ENCODE measurements at regions of chr7 and their contacts with region 1.

Region 1: DNA sequence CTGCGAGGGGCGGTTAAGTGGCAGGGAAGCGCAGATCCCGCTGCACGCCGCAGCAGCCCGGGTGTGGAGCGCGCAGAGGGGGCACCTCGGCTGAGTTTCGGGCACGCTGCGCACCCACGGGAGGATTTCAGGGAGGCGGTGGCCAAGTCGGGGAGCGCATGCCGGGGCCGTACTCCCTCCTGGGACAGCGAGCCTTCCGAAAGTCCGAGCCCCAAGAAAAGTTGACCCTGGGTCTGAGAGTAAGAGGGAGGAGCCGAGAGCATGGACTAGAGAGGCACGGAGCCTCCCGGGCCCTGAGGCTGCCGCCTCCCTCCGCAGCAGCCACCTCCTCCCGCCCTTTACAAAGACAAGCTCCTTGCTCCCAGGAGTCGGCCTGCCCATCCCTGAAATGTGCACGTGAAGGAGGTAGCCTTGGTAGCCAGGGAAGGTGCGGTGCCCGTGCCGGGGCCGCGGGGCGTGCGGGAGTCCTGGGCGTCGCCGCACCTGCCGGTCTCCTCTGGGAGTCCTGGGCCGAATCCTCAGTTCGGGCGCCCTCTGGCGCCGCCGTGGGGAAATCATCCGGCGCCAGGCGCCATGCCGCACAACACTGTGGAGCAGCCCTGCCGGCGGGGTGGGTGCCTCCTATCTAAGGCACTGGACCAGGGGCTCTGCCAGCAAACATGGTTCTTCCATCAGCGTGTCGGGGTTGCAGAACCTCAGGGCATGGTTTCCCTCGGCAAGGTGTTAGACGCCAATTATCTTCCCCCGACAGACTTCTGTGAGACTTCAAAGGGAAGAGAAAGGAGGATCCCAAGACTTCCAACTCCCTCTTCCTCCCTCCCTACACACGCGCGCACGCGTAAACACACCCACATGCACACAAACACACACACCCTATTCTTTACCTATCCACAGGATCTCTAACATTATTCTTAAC is 104.0 kb downstream of the TRIL start:
- DNase-seq: peak; percentile 74 to 91 (median 83)
- ATAC-seq: peak; percentile 91 to 99 (median 99)
- H3K4me3 ChIP-seq: peak overlapping the region; percentile 27 to 67 (median 60)
- H3K27ac ChIP-seq: peak overlapping the region in 1 of 12 donors; percentile 4
- H3K4me1 ChIP-seq: peaks cover 0 to 14% (median 6%) of the 10 kb centered on the region in 12 donors
- H3K27me3 ChIP-seq: peaks cover 0 to 23% (median 0%) of the 10 kb centered on the region in 9 donors
- CTCF ChIP-seq: peak; percentile 71 to 97 (median 92)
- POLR2A ChIP-seq: no peak

Region 2: DNA sequence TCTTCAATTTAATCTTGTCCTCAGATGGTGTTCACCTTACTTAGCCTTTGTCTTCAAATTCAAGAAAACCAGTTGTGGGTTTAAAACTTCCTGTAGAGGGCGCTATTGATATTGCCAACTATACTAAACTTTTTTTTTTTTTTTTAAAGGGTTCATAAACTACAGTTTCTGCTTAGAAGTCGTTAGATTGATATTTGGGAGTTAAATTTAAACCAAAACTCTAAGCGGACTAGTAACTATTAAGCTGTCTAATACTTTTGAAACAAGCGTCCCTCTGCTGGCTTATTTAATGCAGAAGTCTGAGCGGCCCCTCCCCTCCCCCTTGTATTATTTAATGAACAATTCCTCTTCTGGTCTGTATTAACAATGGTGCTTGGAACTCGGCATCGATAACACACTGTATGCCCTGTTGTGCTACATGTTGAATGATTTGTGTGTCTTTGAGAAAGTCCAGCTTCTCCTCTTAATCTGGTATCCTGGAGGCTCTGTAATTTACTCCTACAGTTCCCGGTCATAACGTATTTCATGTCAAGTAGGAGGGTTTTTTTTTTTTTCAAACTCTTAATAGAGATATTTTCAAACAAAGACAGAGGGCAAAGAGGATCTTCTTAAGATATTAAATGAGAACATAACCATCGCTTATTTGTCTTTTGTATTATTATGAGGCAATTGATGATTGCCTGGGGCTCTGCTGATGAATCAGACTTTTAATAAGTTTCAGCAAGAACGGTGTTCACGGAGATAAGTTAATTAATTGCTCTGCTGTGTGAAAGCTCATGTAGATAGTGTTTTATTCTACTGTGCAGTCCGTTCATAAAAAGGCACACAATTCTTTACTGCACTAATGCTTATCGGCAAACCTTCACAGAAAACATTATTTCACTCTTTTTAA is 464.3 kb before region 1 on chr7:
- intact Hi-C with region 1: loop called (anchors 1 to 5 kb)
- DNase-seq: no peak
- ATAC-seq: peak in 2 of 4 donors; percentile 38 to 44
- H3K4me3 ChIP-seq: peak overlapping the region in 11 of 12 donors; percentile 8 to 52 (median 43)
- H3K27ac ChIP-seq: peak overlapping the region in 4 of 12 donors; percentile 1 to 53 (median 38)
- H3K4me1 ChIP-seq: peaks cover 0 to 5% (median 0%) of the 10 kb centered on the region in 12 donors
- H3K27me3 ChIP-seq: peaks cover 0 to 3% (median 0%) of the 10 kb centered on the region in 9 donors
- CTCF ChIP-seq: peak; percentile 73 to 92 (median 84)
- POLR2A ChIP-seq: no peak

Region 3: DNA sequence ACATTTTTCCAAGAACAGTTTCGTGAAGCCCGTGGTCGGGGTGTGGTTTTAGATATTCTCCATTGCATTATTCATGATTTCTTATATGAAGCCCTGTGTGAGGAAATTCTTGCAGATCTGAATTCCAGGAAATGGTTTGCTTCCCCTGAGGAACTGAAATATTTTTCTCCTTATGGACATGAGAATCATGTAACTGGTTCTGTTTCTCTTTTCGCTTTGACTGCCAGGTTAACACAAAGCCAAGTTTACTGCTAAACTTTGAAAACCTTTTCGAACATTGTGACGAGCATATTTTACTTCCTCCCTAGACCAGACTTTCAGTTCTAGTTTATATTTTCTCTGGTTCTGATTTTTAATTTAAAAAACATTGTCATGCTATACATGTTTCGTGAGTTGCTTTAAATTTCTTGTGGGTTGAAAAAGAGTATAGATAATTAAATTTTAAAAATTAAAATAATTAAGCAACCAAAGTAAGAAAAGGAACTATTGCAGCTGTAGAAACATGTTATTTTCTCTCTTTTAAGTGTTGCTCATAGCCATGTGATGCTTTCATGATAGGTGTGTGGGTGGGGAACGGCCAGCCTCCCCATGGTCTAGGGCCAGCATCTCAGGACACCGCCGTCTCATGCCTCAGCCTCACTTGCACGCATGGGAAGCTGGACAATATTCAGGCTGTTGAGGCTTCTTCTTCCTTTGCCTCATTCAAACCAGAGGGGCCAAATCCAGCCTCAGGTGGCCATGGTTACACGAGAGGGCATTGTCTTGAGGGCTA is 344.7 kb before region 1 on chr7:
- intact Hi-C with region 1: loop called in 1 of 10 experiments (anchors 10 kb)
- DNase-seq: peak in 2 of 5 donors; percentile 37
- ATAC-seq: peak; percentile 53 to 90 (median 73)
- H3K4me3 ChIP-seq: peak overlapping the region in 6 of 12 donors; percentile 7 to 25 (median 9)
- H3K27ac ChIP-seq: peak overlapping the region in 3 of 12 donors; percentile 29 to 84 (median 39)
- H3K4me1 ChIP-seq: peaks cover 0 to 26% (median 2%) of the 10 kb centered on the region in 12 donors
- H3K27me3 ChIP-seq: no peaks in the 10 kb centered on the region
- CTCF ChIP-seq: no peak
- POLR2A ChIP-seq: no peak

Region 4: DNA sequence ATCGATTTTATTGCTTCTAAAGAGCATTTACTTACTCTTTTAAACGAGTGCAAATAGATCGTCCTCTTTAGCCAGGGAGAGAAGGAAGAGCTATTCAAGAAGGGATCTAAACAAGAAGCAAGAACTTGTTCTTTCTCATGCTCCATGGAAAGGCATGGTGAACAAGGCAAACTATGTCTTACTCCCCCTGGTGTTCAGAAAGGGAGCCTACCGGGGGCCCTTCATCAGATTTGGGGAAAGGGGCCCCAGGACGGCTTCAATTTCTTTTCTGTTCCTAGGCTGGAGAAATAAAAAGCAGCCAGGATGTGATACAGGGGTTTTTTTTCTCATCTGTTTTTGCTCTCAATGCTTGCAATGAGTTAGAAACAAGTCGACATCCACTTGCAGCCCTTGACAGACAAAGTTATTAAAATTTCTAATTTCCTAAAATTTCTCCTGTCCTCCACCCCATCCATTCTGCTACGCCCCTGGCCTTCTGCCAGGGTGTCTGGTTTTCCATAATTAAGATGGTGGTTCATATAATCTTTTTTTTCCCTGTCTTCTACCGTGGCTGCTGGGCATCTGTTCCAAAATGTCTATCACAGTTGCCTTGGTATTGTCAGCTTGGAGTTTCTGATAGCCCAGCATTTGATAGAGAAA is 227.3 kb before region 1 on chr7:
- intact Hi-C with region 1: loop called in 6 of 10 experiments (anchors 5 to 10 kb)
- DNase-seq: no peak
- ATAC-seq: peak in 2 of 4 donors; percentile 17 to 37
- H3K4me3 ChIP-seq: no peak overlapping the region
- H3K27ac ChIP-seq: peak overlapping the region in 4 of 12 donors; percentile 2 to 43 (median 40)
- H3K4me1 ChIP-seq: peaks cover 0 to 80% (median 34%) of the 10 kb centered on the region in 12 donors
- H3K27me3 ChIP-seq: no peaks in the 10 kb centered on the region
- CTCF ChIP-seq: peak; percentile 46 to 79 (median 71)
- POLR2A ChIP-seq: no peak

Region 5: GRCh38 chr7:28698840-28699239 is 155.3 kb before region 1 on chr7:
- intact Hi-C with region 1: loop called in 1 of 10 experiments (anchors 2 kb)
- DNase-seq: no peak
- ATAC-seq: peak in 2 of 4 donors; percentile 30 to 43
- H3K4me3 ChIP-seq: peak overlapping the region in 6 of 12 donors; percentile 5 to 21 (median 13)
- H3K27ac ChIP-seq: peak overlapping the region in 9 of 12 donors; percentile 2 to 66 (median 32)
- H3K4me1 ChIP-seq: peaks cover 0 to 79% (median 67%) of the 10 kb centered on the region in 12 donors
- H3K27me3 ChIP-seq: no peaks in the 10 kb centered on the region
- CTCF ChIP-seq: no peak
- POLR2A ChIP-seq: no peak

Region 6: DNA sequence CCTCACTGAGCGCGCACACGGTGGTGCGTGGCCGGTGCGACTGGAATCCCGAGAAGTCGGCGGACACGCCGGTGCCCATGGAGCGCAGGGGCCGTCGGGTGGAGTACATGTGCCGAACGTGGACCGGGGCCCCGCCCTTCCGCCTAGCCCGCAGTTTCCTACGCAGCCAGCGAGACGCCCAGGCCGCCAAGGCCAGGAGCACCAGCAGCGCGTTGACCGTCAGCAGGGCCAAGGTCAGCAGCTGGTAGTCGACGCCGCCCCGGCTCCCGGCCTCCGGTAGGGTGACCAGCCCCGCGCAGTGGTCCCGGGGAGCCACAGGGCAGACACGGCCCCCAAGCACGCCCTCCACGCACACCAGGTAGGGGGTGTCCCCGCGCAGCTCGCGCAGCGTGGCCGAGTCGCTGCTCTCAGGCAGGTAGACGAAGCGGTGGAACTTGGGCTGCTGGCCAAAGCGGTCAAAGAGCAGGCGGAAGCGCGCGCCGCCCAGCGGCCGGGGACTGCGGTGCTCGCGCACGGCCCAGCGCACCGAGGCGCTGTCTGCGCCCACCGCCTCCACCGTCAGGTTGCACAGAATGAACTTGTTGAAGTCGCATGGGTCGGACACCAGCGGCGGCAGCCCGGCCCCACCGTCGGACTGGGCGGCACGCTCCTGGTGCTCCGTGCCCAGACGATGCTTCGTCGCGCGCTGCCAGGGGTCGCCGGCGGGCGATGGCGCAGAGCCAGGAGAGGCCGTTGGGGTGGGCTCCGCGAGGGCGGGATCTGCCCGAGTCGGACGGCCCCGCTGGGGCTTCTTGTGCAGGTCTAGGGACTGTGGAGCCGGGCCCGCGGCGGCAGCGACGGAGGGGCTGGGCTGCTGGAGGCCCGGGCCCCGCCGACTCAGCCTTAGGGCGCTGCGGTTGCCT is 101.9 kb after region 1 on chr7:
- intact Hi-C with region 1: no loop called
- DNase-seq: peak; percentile 80 to 90 (median 86)
- ATAC-seq: peak in 3 of 4 donors; percentile 38 to 71 (median 67)
- H3K4me3 ChIP-seq: peak overlapping the region; percentile 42 to 73 (median 62)
- H3K27ac ChIP-seq: peak overlapping the region; percentile 10 to 79 (median 65)
- H3K4me1 ChIP-seq: peaks cover 5 to 54% (median 40%) of the 10 kb centered on the region in 12 donors
- H3K27me3 ChIP-seq: peaks cover 0 to 48% (median 0%) of the 10 kb centered on the region in 9 donors
- CTCF ChIP-seq: peak; percentile 44 to 72 (median 56)
- POLR2A ChIP-seq: no peak

Measured in heart left ventricle (tissue), 16 donors.